A673 (cell line): ENCODE measurements at regions of chr6 and their contacts with region 1.

Region 1: GRCh38 chr6:87472525-87473418 is at the start of gene SLC35A1:
- DNase-seq: peak; percentile 87
- H3K4me3 ChIP-seq: peak within 1 kb of the TSS; percentile 85
- H3K27ac ChIP-seq: peak within 1 kb of the TSS; percentile 85
- H3K4me1 ChIP-seq: peaks cover 5% of the 10 kb centered on the region
- H3K27me3 ChIP-seq: peaks cover 9% of the 10 kb centered on the region
- CTCF ChIP-seq: no peak
- total RNA-seq, gene SLC35A1: 11.5 and 13.0 TPM in 2 replicates

Region 2: DNA sequence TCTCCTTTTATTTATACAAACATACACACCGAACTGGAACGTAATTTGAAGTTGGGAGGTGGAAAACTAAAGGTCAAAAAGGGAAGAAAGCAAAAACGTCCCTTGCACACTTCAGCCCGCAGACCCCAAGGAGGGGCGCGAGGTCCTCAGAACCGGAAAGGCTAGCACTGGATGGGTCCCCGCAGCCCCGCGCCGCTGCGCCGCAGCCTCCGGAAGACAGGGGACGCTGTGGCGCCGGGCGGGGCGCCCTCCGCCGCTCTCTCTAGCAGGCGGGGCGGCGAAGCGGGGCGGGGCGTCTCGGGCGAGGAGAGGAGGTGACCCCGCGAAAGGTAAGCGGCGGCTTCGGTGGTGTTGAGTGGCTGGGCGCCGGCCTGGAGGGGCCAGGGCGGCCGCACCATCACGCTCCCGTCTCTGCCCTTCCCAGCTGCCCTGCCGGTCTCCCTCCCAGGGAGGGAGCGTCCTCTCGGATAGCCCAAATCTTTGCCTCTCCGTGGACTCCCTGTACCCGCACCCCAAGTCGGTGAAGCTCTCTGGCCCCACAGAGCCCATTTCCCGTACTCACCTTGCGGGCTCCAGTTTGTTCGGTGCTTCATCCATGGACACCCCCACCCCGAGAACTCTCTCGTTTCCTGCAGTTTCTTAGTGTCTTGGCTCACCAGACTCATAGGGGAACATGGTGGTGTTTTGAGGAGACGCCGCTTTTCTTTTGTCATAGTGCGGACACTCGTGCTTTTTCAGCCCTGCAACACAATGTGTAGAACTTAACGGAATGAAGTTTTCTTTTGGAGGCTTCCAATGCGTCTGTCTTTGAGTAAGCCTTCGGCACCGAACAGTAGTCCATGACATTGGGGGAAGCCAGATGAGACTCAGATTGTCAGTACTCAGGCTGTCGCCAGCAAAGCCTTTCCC is 150.2 kb before region 1 on chr6 and contains the start of gene SMIM8:
- CTCF ChIA-PET with region 1: no interaction called
- POLR2A ChIA-PET with region 1: no interaction called
- intact Hi-C with region 1: loop called (anchors 2 kb)
- DNase-seq: peak; percentile 88
- H3K4me3 ChIP-seq: peak within 1 kb of the TSS; percentile 76
- H3K27ac ChIP-seq: peak within 1 kb of the TSS; percentile 70
- H3K4me1 ChIP-seq: no peaks in the 10 kb centered on the region
- H3K27me3 ChIP-seq: no peaks in the 10 kb centered on the region
- CTCF ChIP-seq: peak; percentile 88
- total RNA-seq, gene SMIM8: 13.6 and 18.8 TPM in 2 replicates

Region 3: DNA sequence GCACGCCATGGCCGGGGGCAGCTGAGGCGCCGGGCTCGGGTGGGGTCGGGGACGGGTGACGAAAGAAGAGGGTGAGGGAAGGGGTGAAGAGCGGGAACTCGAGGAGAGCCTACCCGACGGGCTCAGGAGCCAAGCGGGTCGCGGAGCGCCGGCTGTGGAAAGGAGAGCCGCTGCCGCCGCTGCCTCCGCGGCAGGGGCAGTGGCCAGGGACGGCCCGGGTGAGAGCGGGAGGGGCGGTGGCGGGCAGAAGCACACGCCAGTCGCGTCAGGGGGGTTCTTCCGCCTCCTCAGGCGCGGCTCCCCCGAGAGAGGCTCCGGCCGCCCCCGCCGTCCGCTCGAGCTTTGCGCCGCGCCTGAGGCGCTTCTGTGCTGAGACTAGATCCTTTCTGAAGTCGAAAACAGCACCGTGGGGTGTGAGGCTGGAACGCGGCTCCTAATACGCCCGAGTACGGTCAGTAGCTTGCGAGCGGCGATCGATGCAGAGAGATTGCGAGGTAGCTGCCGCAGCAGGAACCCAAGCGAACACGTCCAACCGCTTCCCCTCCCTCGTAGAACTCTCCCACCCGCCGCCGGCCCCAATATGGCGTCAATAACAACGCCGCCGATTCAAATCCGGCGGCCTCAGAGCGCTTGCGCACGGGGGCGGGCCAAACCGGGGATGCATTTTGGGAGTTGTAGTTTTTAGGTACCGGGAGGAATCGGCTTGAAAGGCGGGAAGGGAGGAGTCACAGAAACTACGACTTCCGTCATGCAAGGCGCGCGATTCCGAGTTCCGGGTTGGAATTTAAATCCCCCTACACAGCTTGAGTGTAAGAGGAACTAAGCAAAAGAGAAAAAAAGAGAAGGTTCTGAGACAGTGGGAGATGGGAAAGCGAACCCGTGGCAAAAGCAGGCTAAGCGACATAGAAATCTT is 229.2 kb after region 1 on chr6 and contains the start of gene AKIRIN2:
- CTCF ChIA-PET with region 1: no interaction called
- POLR2A ChIA-PET with region 1: no interaction called
- intact Hi-C with region 1: loop called (anchors 10 kb)
- DNase-seq: peak; percentile 99
- H3K4me3 ChIP-seq: peak within 1 kb of the TSS; percentile 94
- H3K27ac ChIP-seq: peak within 1 kb of the TSS; percentile 96
- H3K4me1 ChIP-seq: peaks cover 20% of the 10 kb centered on the region
- H3K27me3 ChIP-seq: no peaks in the 10 kb centered on the region
- CTCF ChIP-seq: no peak
- total RNA-seq, gene AKIRIN2: 66.7 and 68.9 TPM in 2 replicates